Mammary epithelial cell (primary cell): ENCODE measurements at regions of chr18 and their contacts with region 1.

Region 1: DNA sequence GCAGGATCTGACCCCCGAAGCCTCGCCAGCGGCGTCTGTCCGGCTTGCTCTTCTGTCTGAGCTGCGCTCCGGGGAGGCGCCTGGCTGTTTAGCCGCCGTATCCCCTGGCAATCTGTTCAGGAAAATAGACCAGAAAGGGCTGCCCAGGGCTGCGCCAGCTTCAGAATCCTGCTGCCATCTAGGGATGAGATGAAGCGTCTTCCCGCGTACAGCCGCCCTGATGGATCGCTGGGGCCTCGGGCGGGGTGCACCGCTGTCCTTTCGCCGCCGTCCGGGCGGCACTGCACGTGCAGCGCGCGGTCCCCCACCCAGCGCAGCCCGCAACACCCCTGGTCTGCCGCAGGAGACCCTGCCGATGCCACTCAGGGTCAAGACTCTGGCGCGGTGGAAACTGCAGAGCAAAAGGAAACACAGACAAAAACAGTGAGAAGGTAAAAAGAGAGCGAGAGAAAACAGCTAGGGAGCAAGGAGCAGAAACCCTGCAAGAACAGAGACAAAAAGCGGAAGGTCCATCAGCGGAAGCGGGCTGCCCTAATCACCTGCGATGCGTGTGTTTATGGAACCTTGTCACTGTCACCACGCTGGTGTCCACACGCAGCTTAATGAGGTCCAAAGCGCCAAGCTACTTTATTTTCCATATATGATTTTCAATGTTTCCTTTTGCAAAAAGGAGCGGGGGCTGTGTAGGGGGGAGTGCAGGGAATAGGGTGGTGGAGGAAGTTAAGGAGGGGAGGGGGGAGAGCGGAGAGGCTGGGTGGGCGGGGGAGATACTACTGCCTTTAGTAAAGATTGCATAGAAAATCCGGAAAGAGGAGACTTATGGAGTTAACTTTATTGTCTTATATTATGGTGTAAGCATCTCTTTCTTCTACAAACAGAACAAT is 2113.3 kb upstream of the PIK3C3 start:
- DNase-seq: peak; percentile 63
- H3K4me3 ChIP-seq: peak overlapping the region; percentile 63 to 76 (median 66)
- H3K27ac ChIP-seq: no peak overlapping the region
- H3K4me1 ChIP-seq: peaks cover 19% of the 10 kb centered on the region
- H3K27me3 ChIP-seq: peaks cover under 1% of the 10 kb centered on the region
- CTCF ChIP-seq: peak; percentile 28 to 74

Region 2: DNA sequence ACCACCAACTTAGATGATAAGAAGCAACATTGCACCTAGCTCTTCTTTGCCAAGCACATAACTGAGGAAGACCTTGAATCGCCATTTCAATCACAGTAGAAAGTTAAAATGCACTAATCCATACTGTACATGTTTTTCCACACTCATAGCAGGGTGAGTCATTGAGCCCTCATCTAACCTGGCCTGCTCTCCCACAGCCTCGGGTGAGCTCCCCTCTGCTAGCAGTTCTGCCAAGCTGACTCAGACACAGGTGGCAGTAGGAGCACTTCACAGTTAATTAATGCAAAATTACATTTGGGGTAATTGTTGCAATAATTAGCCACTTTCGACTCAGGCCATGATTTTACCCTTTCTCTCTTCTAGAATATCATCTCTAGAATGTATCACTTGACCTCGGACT is 643.3 kb before region 1 on chr18:
- CTCF ChIA-PET with region 1: no interaction called
- dilution Hi-C with region 1: no loop called
- in situ Hi-C with region 1: loop called in 1 of 2 experiments (anchors 25 kb)
- intact Hi-C with region 1: no loop called
- DNase-seq: peak; percentile 57
- H3K4me3 ChIP-seq: no peak overlapping the region
- H3K27ac ChIP-seq: no peak overlapping the region
- H3K4me1 ChIP-seq: peaks cover 8% of the 10 kb centered on the region
- H3K27me3 ChIP-seq: no peaks in the 10 kb centered on the region
- CTCF ChIP-seq: no peak

Region 3: DNA sequence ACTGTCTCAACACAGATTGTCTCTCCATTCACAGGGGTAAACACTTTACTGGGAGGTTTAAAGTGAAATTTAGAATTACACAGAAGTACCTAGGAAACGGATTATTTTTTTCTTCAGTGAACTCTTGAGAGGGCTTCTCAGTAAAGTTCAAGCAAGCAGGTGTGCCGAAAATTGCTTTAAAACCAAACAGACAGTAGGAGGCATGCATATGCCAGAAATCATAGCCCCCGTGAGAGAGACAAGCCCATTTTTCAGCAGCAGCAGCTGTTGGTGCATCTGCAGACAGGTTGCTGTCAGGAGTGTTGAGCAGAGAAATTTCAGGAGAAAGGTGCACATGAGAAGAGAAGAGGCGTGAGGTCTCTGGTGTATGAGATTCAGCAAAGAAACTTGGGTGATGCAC is 160.7 kb before region 1 on chr18:
- CTCF ChIA-PET with region 1: no interaction called
- dilution Hi-C with region 1: no loop called
- in situ Hi-C with region 1: no loop called
- intact Hi-C with region 1: loop called (anchors 1 kb)
- DNase-seq: no peak
- H3K4me3 ChIP-seq: no peak overlapping the region
- H3K27ac ChIP-seq: no peak overlapping the region
- H3K4me1 ChIP-seq: no peaks in the 10 kb centered on the region
- H3K27me3 ChIP-seq: no peaks in the 10 kb centered on the region
- CTCF ChIP-seq: no peak

Region 4: GRCh38 chr18:39788383-39788782 is 53.3 kb before region 1 on chr18:
- CTCF ChIA-PET with region 1: no interaction called
- dilution Hi-C with region 1: no loop called
- in situ Hi-C with region 1: no loop called
- intact Hi-C with region 1: no loop called
- DNase-seq: peak; percentile 57
- H3K4me3 ChIP-seq: no peak overlapping the region
- H3K27ac ChIP-seq: no peak overlapping the region
- H3K4me1 ChIP-seq: peaks cover 20% of the 10 kb centered on the region
- H3K27me3 ChIP-seq: no peaks in the 10 kb centered on the region
- CTCF ChIP-seq: no peak

Region 5: GRCh38 chr18:39960550-39960949 is 118.8 kb after region 1 on chr18:
- CTCF ChIA-PET with region 1: no interaction called
- dilution Hi-C with region 1: no loop called
- in situ Hi-C with region 1: no loop called
- intact Hi-C with region 1: loop called (anchors 1 kb)
- DNase-seq: peak; percentile 84
- H3K4me3 ChIP-seq: no peak overlapping the region
- H3K27ac ChIP-seq: peak overlapping the region; percentile 91
- H3K4me1 ChIP-seq: peaks cover 40% of the 10 kb centered on the region
- H3K27me3 ChIP-seq: no peaks in the 10 kb centered on the region
- CTCF ChIP-seq: no peak

Region 6: GRCh38 chr18:40168026-40168425 is 326.3 kb after region 1 on chr18:
- CTCF ChIA-PET with region 1: no interaction called
- dilution Hi-C with region 1: no loop called
- in situ Hi-C with region 1: no loop called
- intact Hi-C with region 1: no loop called
- DNase-seq: no peak
- H3K4me3 ChIP-seq: no peak overlapping the region
- H3K27ac ChIP-seq: no peak overlapping the region
- H3K4me1 ChIP-seq: no peaks in the 10 kb centered on the region
- H3K27me3 ChIP-seq: no peaks in the 10 kb centered on the region
- CTCF ChIP-seq: no peak

Region 7: GRCh38 chr18:40292985-40293710 is 451.4 kb after region 1 on chr18:
- CTCF ChIA-PET with region 1: no interaction called
- dilution Hi-C with region 1: no loop called
- in situ Hi-C with region 1: no loop called
- intact Hi-C with region 1: loop called (anchors 10 kb)
- DNase-seq: peak; percentile 0
- H3K4me3 ChIP-seq: no peak overlapping the region
- H3K27ac ChIP-seq: no peak overlapping the region
- H3K4me1 ChIP-seq: no peaks in the 10 kb centered on the region
- H3K27me3 ChIP-seq: no peaks in the 10 kb centered on the region
- CTCF ChIP-seq: peak; percentile 44 to 54